Left ventricle myocardium inferior (tissue), 1 donor: ENCODE measurements at regions of chr19 and their contacts with region 1.

Region 1: GRCh38 chr19:38707512-38708114 is 36.7 kb downstream of the CAPN12 start:
- DNase-seq: peak; percentile 76
- H3K4me3 ChIP-seq: no peak overlapping the region
- H3K27ac ChIP-seq: peak overlapping the region; percentile 91
- H3K4me1 ChIP-seq: peaks cover 97% of the 10 kb centered on the region
- H3K27me3 ChIP-seq: no peaks in the 10 kb centered on the region
- CTCF ChIP-seq: no peak

Region 2: DNA sequence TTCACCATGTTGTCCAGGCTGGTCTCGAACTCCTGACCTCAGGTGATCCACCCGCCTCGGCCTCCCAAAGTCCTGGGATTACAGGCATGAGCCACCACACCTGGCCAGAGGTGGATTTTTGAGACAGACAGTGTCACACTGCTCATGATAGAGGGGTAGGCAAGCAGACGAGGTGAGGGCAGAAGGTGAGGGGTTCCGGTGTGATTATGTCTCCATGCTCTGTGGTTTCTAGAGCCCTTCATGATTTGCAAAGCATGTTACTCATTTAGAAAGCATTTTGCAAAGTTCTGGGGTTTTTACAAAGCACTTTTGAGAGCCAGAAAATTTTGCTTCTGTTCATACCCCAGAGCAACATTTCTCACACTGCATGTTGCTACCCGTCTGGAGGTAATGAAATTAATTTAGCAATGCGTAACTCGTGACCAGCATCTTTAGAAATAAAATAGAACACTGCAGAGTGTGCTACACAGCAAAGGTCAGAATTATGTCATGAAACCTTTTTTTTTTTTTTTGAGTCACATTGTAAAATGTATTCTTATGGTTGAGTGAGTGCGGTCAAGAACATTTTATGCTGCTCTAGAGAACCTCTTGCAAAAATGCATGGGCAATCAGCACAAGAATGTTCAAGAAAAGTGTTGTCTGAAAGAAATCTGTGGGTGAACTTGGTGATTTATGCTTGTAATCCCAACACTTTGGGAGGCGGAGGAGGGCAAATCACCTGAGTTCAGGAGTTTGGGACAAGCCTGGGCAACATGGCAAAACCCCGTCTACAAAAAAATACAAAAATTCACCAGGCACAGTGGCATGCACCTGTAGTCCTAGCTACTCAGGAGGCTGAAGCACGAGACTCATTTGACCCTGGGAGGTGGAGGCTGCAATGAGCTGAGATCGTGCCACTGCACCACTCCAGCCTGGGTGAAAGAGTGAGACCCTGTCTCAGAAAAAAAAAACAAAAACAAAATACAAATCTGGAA is 147.9 kb before region 1 on chr19:
- intact Hi-C with region 1: no loop called
- DNase-seq: no peak
- H3K4me3 ChIP-seq: no peak overlapping the region
- H3K27ac ChIP-seq: no peak overlapping the region
- H3K4me1 ChIP-seq: no peaks in the 10 kb centered on the region
- H3K27me3 ChIP-seq: peaks cover 70% of the 10 kb centered on the region
- CTCF ChIP-seq: no peak

Region 3: DNA sequence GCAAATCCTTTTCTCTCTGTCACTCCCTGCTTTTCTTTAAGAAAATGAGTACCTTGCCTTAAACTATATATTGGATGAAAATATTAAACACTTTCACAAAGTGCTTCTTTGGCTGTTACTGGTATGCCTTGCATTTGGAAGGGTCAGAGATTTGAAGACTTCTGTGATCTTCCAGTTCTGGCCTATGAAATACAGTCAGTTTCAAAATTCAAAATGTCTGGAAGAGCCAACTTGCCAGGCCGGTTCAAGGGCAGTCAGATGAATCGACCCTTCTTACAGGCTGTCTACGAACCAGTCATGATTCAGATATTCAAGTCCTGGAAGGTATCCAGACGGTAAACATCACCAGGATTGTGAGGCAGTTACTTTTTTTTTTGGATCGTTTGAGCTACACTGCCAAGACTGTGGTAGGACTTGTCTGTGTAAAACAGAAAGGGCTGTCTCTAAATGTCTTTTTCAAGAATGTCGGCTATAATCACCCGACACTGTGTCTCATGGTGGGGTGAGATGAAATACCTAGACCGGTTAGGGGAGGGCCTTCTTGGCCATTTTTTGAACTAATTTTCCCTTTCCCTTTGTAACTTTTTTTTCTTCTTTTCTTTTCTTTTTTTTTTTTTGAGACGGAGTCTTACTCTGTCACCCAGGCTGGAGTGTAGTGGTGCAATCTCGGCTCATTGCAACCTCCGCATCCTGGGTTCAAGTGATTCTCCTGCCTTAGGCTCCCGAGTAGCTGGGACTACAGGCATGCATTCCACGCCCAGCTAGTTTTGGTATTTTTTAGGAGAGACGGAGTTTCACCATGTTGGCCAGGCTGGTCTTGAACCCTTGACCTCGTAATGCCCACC is 48.9 kb before region 1 on chr19:
- intact Hi-C with region 1: loop called (anchors 10 kb)
- DNase-seq: no peak
- H3K4me3 ChIP-seq: peak overlapping the region; percentile 46
- H3K27ac ChIP-seq: peak overlapping the region; percentile 95
- H3K4me1 ChIP-seq: peaks cover 100% of the 10 kb centered on the region
- H3K27me3 ChIP-seq: no peaks in the 10 kb centered on the region
- CTCF ChIP-seq: no peak

Region 4: GRCh38 chr19:38838573-38839269 is 131.1 kb after region 1 on chr19:
- intact Hi-C with region 1: no loop called
- DNase-seq: no peak
- H3K4me3 ChIP-seq: no peak overlapping the region
- H3K27ac ChIP-seq: no peak overlapping the region
- H3K4me1 ChIP-seq: peaks cover 46% of the 10 kb centered on the region
- H3K27me3 ChIP-seq: no peaks in the 10 kb centered on the region
- CTCF ChIP-seq: no peak